ENCODE measurements at regions of chr12 and their contacts with region 1.

Region 1: DNA sequence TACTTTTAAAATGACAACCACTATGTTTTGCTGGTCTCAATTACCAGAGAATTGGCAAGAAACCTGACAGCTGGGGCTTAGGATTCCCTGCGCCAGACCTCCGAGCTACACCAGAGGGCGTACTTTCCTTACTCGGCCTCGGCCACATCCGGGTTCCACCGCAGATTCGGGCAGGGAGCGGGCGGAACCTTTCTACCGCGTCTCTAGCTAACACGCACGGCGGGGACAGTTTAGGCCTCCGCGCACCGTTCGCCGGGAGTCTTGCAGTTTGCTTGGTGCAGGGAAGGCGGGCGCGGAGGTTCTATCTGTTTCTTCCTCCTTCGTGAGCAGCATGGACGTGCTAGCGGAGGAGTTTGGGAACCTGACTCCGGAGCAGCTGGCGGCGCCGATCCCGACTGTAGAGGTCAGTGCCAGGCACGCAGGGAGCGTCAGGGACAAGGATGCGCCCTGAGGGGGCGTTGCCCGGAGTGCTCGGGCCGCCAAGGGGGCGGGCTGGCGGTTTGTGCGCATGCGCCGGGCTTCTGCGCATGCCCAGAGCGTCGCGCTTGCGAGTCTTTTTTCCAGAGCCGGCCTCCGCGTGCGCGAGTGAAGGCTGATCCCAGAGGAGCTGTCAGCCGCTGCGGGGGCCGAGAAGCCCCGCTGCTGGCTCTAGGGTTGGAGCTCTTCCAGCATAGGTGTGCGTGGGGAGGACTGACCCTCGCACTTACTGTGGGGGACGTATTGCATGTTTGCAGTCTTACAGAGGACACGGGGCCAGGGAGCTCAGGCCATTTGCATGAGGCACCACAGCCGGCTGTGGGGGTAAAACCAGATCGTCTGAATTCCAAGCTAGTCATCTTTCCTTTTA is at the start of gene POLR3B:
- DNase-seq: peak; percentile 96
- total RNA-seq, gene POLR3B: 9.4 TPM

Region 2: DNA sequence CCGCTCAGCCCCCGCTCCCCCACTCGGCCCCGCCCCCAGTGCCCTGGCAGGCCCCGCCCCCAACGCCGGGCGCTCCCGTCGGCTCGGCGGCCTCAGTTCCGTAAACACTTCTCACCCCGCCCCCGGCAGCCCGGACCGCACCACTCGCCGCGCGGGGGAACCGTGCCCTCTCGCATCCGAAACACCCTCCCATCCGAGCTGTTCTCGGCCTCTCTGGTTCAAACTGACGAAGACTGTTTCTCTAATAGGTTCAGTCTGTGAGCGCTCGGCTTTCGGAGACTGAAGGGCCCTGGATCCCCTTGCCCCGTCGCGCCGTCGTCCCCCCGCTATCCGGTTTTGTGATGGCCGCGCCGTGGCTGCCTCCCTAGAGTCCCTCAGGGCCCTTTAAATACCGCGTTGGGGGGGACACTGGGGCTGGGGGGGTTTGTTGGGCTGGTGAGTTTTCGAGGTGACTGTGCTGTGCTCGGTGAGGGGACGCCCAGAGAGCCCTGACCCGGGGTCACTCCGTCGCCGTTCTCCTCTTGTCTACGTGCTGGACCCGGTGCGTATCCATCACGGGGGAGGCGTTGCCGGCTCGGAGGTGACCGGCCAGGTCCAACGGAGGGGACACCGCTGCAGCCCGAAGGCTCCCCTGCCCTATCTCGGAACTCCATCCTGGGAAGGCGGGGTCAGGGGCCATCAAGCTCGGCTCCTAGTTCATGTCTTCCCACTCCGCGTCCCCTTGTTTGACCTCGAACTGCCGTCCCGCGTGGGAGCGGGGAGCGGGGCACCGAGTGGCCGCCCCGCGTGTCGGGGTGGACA is 55.2 kb before region 1 on chr12 and contains the start of gene TCP11L2:
- intact Hi-C with region 1: loop called (anchors 1 kb)
- DNase-seq: peak; percentile 96
- total RNA-seq, gene TCP11L2: 61.2 TPM

Region 3: GRCh38 chr12:106498056-106498455 is 140.3 kb after region 1 on chr12:
- intact Hi-C with region 1: no loop called
- DNase-seq: no peak

Region 4: DNA sequence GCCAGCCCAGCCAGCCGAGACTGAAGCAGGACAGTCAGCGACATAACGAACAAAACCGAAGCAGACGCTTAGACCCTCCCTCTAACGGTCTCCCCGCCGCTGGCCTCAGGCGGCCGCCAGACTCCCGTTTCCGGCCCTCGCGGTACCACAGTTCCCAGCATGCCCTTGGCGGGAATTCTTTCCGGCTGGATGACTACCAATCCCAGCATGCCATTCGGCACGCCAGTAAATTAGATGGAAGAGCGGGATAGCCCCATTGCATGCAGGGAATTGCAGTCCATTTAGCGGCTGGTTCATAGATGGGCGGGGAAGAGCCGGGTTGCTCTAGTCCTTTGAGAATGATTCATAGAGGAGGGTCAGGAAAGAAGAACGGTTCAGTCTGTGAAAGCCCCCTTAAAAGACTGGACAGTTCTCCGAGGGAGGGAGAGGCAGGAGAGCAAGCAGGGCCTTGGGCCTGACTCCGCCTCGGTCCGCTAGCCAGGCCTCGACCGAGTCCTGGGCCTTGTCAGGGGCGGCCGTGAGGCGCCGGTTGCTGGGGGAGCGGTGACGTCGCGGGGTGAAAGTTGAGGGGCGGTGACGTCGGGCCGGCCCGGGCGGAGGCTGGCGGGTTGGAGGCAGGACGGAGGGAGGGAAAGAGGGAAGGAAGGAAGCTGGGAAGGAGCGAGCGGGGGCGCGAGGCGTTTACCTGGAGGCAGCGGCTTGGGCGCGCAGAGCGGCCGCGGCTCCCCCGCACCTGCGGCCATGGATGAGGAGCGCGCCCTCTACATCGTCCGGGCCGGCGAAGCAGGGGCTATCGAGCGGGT is 416.4 kb after region 1 on chr12 and contains the start of gene RIC8B:
- intact Hi-C with region 1: loop called (anchors 5 kb)
- DNase-seq: peak; percentile 96
- total RNA-seq, gene RIC8B: 23.5 TPM